B cell (primary cell): ENCODE measurements at regions of chr2 and their contacts with region 1.

Region 1: GRCh38 chr2:174577967-174578589 is 19.5 kb downstream of the WIPF1 start:
- DNase-seq: peak; percentile 78
- ATAC-seq: peak; percentile 72
- H3K4me3 ChIP-seq: no peak overlapping the region
- H3K4me3 Mint-ChIP-seq: no peak overlapping the region
- H3K27ac ChIP-seq: peak overlapping the region in 1 of 2 donors; percentile 72
- H3K27ac Mint-ChIP-seq: peak overlapping the region; percentile 57
- H3K4me1 ChIP-seq: peaks cover 31 to 34% of the 10 kb centered on the region in 2 donors
- H3K4me1 Mint-ChIP-seq: peaks cover 52% of the 10 kb centered on the region
- H3K27me3 ChIP-seq: no peaks in the 10 kb centered on the region
- H3K27me3 Mint-ChIP-seq: no peaks in the 10 kb centered on the region
- CTCF ChIP-seq: peak; percentile 81

Region 2: DNA sequence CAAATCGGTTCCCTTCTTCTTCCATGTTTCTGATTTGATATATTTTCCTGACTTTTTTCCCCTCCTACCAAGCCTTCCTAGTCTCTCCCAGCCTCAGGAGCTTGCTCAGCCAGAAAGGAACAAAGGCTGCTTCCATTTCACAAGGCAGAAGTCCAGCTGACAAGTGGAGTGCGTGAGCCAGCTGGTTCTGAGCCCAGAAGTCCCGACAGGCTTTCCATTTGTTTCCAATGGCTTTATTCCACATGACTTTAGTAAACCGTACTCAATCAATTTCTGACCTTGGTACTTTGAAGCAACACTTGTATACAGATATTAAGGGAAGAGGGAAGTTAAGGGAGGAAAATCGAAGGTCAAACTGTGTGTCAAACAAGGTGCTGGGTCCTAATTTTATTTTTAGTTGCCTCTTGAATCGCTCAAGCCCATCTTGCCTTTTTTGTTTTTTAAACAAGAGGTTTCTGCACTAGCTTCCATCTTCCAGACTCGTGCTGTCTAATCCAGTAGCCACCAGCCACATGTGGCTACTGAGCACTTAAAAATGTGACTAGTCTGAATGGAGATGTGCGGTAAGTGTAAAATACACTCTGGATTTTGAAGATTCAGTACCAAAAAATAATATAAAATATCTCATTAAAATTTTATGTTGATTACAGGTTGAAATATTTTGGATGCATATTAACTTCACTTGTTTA is 16.7 kb before region 1 on chr2:
- CTCF ChIA-PET with region 1: interaction called, 11 read pairs
- POLR2A ChIA-PET with region 1: no interaction called
- intact Hi-C with region 1: no loop called
- DNase-seq: no peak
- ATAC-seq: no peak
- H3K4me3 ChIP-seq: no peak overlapping the region
- H3K4me3 Mint-ChIP-seq: no peak overlapping the region
- H3K27ac ChIP-seq: peak overlapping the region in 1 of 2 donors; percentile 53
- H3K27ac Mint-ChIP-seq: no peak overlapping the region
- H3K4me1 ChIP-seq: no peaks in the 10 kb centered on the region
- H3K4me1 Mint-ChIP-seq: no peaks in the 10 kb centered on the region
- H3K27me3 ChIP-seq: no peaks in the 10 kb centered on the region
- H3K27me3 Mint-ChIP-seq: no peaks in the 10 kb centered on the region
- CTCF ChIP-seq: no peak

Region 3: GRCh38 chr2:174603280-174603679 is 25.2 kb after region 1 on chr2:
- CTCF ChIA-PET with region 1: interaction called, 384 read pairs
- POLR2A ChIA-PET with region 1: no interaction called
- intact Hi-C with region 1: loop called (anchors 1 kb)
- DNase-seq: peak; percentile 69
- ATAC-seq: no peak
- H3K4me3 ChIP-seq: no peak overlapping the region
- H3K4me3 Mint-ChIP-seq: no peak overlapping the region
- H3K27ac ChIP-seq: peak overlapping the region in 1 of 2 donors; percentile 8
- H3K27ac Mint-ChIP-seq: peak overlapping the region; percentile 71
- H3K4me1 ChIP-seq: peaks cover 69 to 74% of the 10 kb centered on the region in 2 donors
- H3K4me1 Mint-ChIP-seq: peaks cover 86% of the 10 kb centered on the region
- H3K27me3 ChIP-seq: no peaks in the 10 kb centered on the region
- H3K27me3 Mint-ChIP-seq: no peaks in the 10 kb centered on the region
- CTCF ChIP-seq: peak; percentile 71

Region 4: GRCh38 chr2:174667379-174667781 is 89.3 kb after region 1 on chr2:
- CTCF ChIA-PET with region 1: interaction called, 10 read pairs
- POLR2A ChIA-PET with region 1: no interaction called
- intact Hi-C with region 1: no loop called
- DNase-seq: no peak
- ATAC-seq: no peak
- H3K4me3 ChIP-seq: no peak overlapping the region
- H3K4me3 Mint-ChIP-seq: no peak overlapping the region
- H3K27ac ChIP-seq: no peak overlapping the region
- H3K27ac Mint-ChIP-seq: no peak overlapping the region
- H3K4me1 ChIP-seq: peaks cover 19% of the 10 kb centered on the region in 2 donors
- H3K4me1 Mint-ChIP-seq: peaks cover 18% of the 10 kb centered on the region
- H3K27me3 ChIP-seq: peaks cover 0 to 4% (median 0%) of the 10 kb centered on the region in 4 experiments
- H3K27me3 Mint-ChIP-seq: no peaks in the 10 kb centered on the region
- CTCF ChIP-seq: no peak

Region 5: GRCh38 chr2:174688079-174688478 is 110.0 kb after region 1 on chr2:
- CTCF ChIA-PET with region 1: interaction called, 331 read pairs
- POLR2A ChIA-PET with region 1: interaction called, 5 read pairs
- intact Hi-C with region 1: loop called (anchors 1 kb)
- DNase-seq: peak; percentile 65
- ATAC-seq: peak; percentile 42
- H3K4me3 ChIP-seq: no peak overlapping the region
- H3K4me3 Mint-ChIP-seq: no peak overlapping the region
- H3K27ac ChIP-seq: no peak overlapping the region
- H3K27ac Mint-ChIP-seq: no peak overlapping the region
- H3K4me1 ChIP-seq: peaks cover 7 to 8% of the 10 kb centered on the region in 2 donors
- H3K4me1 Mint-ChIP-seq: peaks cover 9% of the 10 kb centered on the region
- H3K27me3 ChIP-seq: peaks cover 0 to 14% (median 0%) of the 10 kb centered on the region in 4 experiments
- H3K27me3 Mint-ChIP-seq: peaks cover 3% of the 10 kb centered on the region
- CTCF ChIP-seq: peak; percentile 76

Region 6: GRCh38 chr2:175957845-175958244 is 1379.8 kb after region 1 on chr2:
- CTCF ChIA-PET with region 1: no interaction called
- POLR2A ChIA-PET with region 1: no interaction called
- intact Hi-C with region 1: no loop called
- DNase-seq: no peak
- ATAC-seq: no peak
- H3K4me3 ChIP-seq: no peak overlapping the region
- H3K4me3 Mint-ChIP-seq: no peak overlapping the region
- H3K27ac ChIP-seq: no peak overlapping the region
- H3K27ac Mint-ChIP-seq: no peak overlapping the region
- H3K4me1 ChIP-seq: no peaks in the 10 kb centered on the region
- H3K4me1 Mint-ChIP-seq: no peaks in the 10 kb centered on the region
- H3K27me3 ChIP-seq: no peaks in the 10 kb centered on the region
- H3K27me3 Mint-ChIP-seq: no peaks in the 10 kb centered on the region
- CTCF ChIP-seq: no peak